T-cell (primary cell): ENCODE measurements at regions of chr17 and their contacts with region 1.

Region 1: DNA sequence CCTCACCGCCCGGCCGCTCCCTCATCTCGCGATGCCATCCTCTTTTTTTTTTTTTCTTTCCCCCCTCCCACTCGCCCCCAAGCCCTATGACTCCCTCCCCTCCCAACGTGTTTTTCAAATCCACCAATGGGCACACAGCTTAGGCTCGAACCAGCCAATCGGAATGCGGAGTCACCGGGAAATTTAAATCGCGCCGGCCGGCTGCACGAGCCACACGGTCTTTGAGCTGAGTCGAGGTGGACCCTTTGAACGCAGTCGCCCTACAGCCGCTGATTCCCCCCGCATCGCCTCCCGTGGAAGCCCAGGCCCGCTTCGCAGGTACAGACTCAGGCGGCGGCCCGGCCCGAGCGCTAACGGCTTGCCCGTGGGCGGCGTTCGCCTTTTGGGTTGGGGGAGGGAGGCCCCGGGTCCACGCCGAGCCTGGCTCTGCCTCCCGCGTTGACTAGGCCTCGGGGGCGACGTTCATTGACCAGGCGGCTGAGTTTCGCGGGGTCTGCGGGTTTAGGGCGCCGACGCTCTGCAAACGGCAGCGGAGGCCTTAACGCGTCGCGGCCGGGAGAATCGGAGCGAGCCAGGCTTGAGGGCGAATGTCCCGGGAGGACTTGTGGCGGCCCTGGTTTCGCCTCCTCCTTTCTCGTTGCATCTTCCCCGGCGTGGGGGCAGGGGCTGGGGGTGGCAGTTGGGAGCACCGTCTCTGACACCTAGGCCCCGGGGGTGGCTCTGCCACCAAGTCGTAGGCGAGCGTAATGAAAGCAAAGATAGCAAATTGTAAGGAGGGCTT is at the start of gene KPNA2:
- DNase-seq: peak; percentile 70 to 96 (median 87)
- ATAC-seq: peak; percentile 87 to 91 (median 90)
- H3K4me3 ChIP-seq: peak within 1 kb of the TSS; percentile 83 to 93
- H3K4me3 Mint-ChIP-seq: peak within 1 kb of the TSS; percentile 78 to 95 (median 91)
- H3K27ac ChIP-seq: peak within 1 kb of the TSS; percentile 88
- H3K27ac Mint-ChIP-seq: peak within 1 kb of the TSS; percentile 82 to 84
- H3K4me1 ChIP-seq: peaks cover 7 to 12% of the 10 kb centered on the region in 2 experiments
- H3K4me1 Mint-ChIP-seq: peaks cover 8 to 21% (median 14%) of the 10 kb centered on the region in 3 donors
- H3K27me3 ChIP-seq: no peaks in the 10 kb centered on the region
- H3K27me3 Mint-ChIP-seq: no peaks in the 10 kb centered on the region
- total RNA-seq, gene KPNA2: 10.1 to 58.1 (median 13.9) TPM

Region 2: GRCh38 chr17:66348584-66349165 is 1687.0 kb before region 1 on chr17:
- CTCF ChIA-PET with region 1: interaction called in 1 of 2 experiments, 12 read pairs
- POLR2A ChIA-PET with region 1: no interaction called
- DNase-seq: no peak
- ATAC-seq: no peak
- H3K4me3 ChIP-seq: no peak overlapping the region
- H3K4me3 Mint-ChIP-seq: peak overlapping the region in 1 of 3 donors; percentile 15
- H3K27ac ChIP-seq: no peak overlapping the region
- H3K27ac Mint-ChIP-seq: no peak overlapping the region
- H3K4me1 ChIP-seq: peaks cover 0 to 20% of the 10 kb centered on the region in 2 experiments
- H3K4me1 Mint-ChIP-seq: peaks cover 68 to 75% (median 75%) of the 10 kb centered on the region in 3 donors
- H3K27me3 ChIP-seq: no peaks in the 10 kb centered on the region
- H3K27me3 Mint-ChIP-seq: no peaks in the 10 kb centered on the region

Region 3: DNA sequence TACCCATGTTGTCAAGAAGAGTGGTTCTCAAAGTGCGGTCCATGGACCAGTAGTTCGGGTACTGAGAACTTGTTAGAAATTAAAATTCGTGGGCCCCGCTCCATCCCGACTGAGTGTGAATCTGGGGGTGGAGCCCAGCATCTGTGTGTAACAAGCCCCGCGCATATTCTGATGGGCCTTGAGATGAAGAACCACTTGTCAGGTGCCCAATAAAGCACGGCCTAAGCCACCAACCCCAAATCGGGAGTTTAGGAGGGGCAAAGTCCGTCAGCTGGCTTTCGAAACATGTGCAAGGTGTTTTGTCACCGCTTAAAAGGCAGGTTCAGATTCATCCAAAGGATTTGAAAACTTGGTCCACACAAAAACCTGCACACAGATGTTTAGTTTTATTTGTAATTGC is 698.9 kb before region 1 on chr17:
- CTCF ChIA-PET with region 1: no interaction called
- POLR2A ChIA-PET with region 1: interaction called in 1 of 2 experiments, 10 read pairs
- DNase-seq: no peak
- ATAC-seq: no peak
- H3K4me3 ChIP-seq: no peak overlapping the region
- H3K4me3 Mint-ChIP-seq: no peak overlapping the region
- H3K27ac ChIP-seq: no peak overlapping the region
- H3K27ac Mint-ChIP-seq: no peak overlapping the region
- H3K4me1 ChIP-seq: no peaks in the 10 kb centered on the region
- H3K4me1 Mint-ChIP-seq: no peaks in the 10 kb centered on the region
- H3K27me3 ChIP-seq: no peaks in the 10 kb centered on the region
- H3K27me3 Mint-ChIP-seq: no peaks in the 10 kb centered on the region

Region 4: GRCh38 chr17:68019675-68020408 is 15.9 kb before region 1 on chr17:
- CTCF ChIA-PET with region 1: interaction called in 1 of 2 experiments, 11 read pairs
- POLR2A ChIA-PET with region 1: interaction called, 3 to 17 read pairs
- DNase-seq: peak; percentile 86 to 99 (median 94)
- ATAC-seq: peak; percentile 90 to 93 (median 93)
- H3K4me3 ChIP-seq: peak overlapping the region; percentile 67 to 71
- H3K4me3 Mint-ChIP-seq: peak overlapping the region; percentile 82 to 93 (median 85)
- H3K27ac ChIP-seq: peak overlapping the region; percentile 59
- H3K27ac Mint-ChIP-seq: peak overlapping the region; percentile 91 to 96
- H3K4me1 ChIP-seq: peaks cover 0 to 10% of the 10 kb centered on the region in 2 experiments
- H3K4me1 Mint-ChIP-seq: peaks cover 14 to 24% (median 23%) of the 10 kb centered on the region in 3 donors
- H3K27me3 ChIP-seq: no peaks in the 10 kb centered on the region
- H3K27me3 Mint-ChIP-seq: peaks cover 3% of the 10 kb centered on the region in 2 donors